ENCODE measurements at regions of chr3 and their contacts with region 1.

Region 1: DNA sequence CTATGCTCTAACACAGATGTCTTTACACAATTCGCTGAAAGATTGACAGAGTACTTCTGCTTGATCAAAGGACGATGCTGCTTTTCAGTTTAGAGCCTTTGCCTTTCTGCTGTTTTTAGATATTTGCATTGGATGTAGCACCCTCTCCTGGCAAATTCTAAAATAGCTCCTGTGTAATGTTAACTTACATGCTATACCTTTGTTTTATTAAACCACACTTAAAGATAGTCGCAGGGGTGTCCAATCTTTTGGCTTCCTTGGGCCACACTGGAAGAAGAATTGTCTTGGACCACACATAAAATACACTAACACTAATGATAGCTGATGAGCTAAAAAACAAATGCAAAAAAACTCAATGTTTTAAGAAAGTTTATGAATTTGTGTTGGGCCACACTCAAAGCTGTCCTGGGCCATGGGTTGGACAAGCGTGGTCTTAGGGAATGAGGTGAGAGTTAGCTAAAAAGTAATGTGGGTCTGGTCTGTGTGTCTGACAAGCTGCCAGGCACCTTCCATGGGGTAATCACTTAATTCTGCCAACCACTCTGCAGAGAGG is 62.9 kb downstream of the ATG7 start:
- DNase-seq: peak in 1 of 2 donors; percentile 74
- ATAC-seq: peak; percentile 78 to 91 (median 91)
- H3K4me3 ChIP-seq: no peak overlapping the region
- H3K4me3 Mint-ChIP-seq: no peak overlapping the region
- H3K27ac ChIP-seq: no peak overlapping the region
- H3K27ac Mint-ChIP-seq: no peak overlapping the region
- H3K4me1 ChIP-seq: no peaks in the 10 kb centered on the region
- H3K4me1 Mint-ChIP-seq: no peaks in the 10 kb centered on the region
- H3K27me3 ChIP-seq: no peaks in the 10 kb centered on the region
- H3K27me3 Mint-ChIP-seq: no peaks in the 10 kb centered on the region
- CTCF ChIP-seq: peak; percentile 58

Region 2: DNA sequence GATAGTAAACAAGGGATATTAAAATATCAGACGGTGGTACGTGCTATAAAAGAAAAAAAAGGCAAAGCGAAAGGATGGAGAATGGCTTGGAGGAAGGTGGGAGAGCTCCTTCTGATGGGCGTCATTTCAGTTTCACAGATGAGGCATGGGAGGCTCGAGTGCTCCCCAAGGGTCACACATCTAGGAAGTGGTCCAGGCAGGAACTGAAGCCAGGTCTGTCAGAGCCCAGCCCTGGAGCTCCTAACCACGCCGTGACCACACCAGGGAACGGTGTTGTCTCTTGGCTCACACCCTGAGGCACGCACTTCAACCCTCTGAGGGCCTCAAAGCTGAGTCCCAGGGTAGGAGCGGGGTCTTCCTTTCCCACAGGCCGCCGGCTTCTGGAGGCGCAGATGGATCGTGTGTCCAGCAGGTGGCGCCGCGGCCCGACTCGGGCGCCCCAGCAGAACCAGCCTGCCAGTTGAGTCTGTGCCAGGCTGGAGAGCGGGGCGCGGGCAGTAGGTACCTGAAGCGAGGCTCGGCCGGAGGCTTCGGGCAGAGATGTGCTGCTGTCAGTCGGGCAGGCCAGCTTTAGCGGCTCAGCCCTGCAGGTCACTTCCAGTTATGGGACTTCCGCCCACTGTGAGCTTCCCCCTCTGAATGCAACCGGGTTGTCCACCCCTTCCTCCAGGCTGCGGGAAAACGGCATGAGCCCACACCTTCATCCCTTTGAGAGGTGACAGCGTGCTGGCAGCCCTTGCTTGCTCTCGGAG is 274.5 kb before region 1 on chr3:
- intact Hi-C with region 1: loop called (anchors 5 kb)
- DNase-seq: peak; percentile 29 to 48
- ATAC-seq: peak; percentile 29 to 70 (median 48)
- H3K4me3 ChIP-seq: no peak overlapping the region
- H3K4me3 Mint-ChIP-seq: no peak overlapping the region
- H3K27ac ChIP-seq: no peak overlapping the region
- H3K27ac Mint-ChIP-seq: no peak overlapping the region
- H3K4me1 ChIP-seq: peaks cover 7% of the 10 kb centered on the region
- H3K4me1 Mint-ChIP-seq: no peaks in the 10 kb centered on the region
- H3K27me3 ChIP-seq: no peaks in the 10 kb centered on the region
- H3K27me3 Mint-ChIP-seq: peaks cover 7 to 18% of the 10 kb centered on the region in 2 donors
- CTCF ChIP-seq: peak; percentile 60

Region 3: GRCh38 chr3:11236595-11237461 is 98.3 kb before region 1 on chr3:
- intact Hi-C with region 1: loop called (anchors 1 kb)
- DNase-seq: peak; percentile 71 to 86
- ATAC-seq: peak; percentile 76 to 81 (median 78)
- H3K4me3 ChIP-seq: no peak overlapping the region
- H3K4me3 Mint-ChIP-seq: no peak overlapping the region
- H3K27ac ChIP-seq: no peak overlapping the region
- H3K27ac Mint-ChIP-seq: no peak overlapping the region
- H3K4me1 ChIP-seq: no peaks in the 10 kb centered on the region
- H3K4me1 Mint-ChIP-seq: no peaks in the 10 kb centered on the region
- H3K27me3 ChIP-seq: no peaks in the 10 kb centered on the region
- H3K27me3 Mint-ChIP-seq: peaks cover 26 to 35% of the 10 kb centered on the region in 2 donors
- CTCF ChIP-seq: peak; percentile 97

Region 4: DNA sequence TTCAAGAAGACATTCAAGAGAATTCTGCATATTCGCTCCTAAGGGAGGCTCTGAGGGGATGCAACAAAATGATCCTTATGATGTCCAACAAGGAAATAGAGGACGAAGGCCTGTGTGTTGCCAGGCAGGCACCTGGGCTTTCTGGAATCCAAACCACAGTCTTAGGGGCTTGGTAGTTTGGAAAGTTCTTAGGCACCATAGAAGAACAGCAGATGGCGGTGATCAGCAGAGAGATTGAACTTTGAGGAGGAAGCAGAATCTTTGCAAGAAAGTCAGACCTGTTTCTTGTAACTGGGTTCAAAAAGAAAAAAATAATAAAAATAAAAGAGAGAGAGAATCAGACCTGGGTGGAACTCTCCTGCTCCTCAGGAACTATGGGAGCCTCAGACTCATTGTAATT is 74.7 kb before region 1 on chr3:
- intact Hi-C with region 1: loop called (anchors 1 kb)
- DNase-seq: peak in 1 of 2 donors; percentile 30
- ATAC-seq: no peak
- H3K4me3 ChIP-seq: no peak overlapping the region
- H3K4me3 Mint-ChIP-seq: no peak overlapping the region
- H3K27ac ChIP-seq: no peak overlapping the region
- H3K27ac Mint-ChIP-seq: no peak overlapping the region
- H3K4me1 ChIP-seq: no peaks in the 10 kb centered on the region
- H3K4me1 Mint-ChIP-seq: no peaks in the 10 kb centered on the region
- H3K27me3 ChIP-seq: no peaks in the 10 kb centered on the region
- H3K27me3 Mint-ChIP-seq: peaks cover 10 to 28% of the 10 kb centered on the region in 2 donors
- CTCF ChIP-seq: no peak

Region 5: DNA sequence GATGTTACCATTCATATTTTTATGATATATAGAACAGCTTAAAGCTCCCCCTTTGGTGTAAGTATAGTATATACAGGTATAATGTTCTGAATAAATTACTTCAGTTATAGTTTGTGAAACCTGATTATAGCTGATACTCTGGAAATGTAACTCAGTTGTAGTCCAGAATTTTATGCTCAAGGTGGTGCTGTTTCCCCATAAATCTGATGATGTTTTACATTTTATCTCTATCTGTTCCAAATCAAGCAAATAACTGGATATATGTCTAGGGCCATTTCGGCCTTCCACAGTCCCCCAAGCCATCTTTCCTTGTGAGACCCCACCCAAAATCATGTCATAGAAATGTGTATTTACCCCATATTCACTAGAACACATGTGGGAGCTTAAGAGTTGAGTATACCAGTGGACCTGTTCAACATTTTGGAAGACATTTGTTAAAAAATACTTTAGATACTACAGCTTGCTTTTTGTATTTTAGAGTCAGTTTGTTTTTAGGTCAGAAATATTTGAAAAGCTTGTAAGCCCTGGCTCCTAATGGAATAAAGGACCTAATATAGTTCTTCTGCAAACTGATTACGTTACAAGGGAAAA is 44.2 kb after region 1 on chr3:
- intact Hi-C with region 1: no loop called
- DNase-seq: peak in 1 of 2 donors; percentile 68
- ATAC-seq: peak in 1 of 3 donors; percentile 61
- H3K4me3 ChIP-seq: no peak overlapping the region
- H3K4me3 Mint-ChIP-seq: no peak overlapping the region
- H3K27ac ChIP-seq: no peak overlapping the region
- H3K27ac Mint-ChIP-seq: peak overlapping the region in 1 of 2 donors; percentile 18
- H3K4me1 ChIP-seq: no peaks in the 10 kb centered on the region
- H3K4me1 Mint-ChIP-seq: no peaks in the 10 kb centered on the region
- H3K27me3 ChIP-seq: no peaks in the 10 kb centered on the region
- H3K27me3 Mint-ChIP-seq: no peaks in the 10 kb centered on the region
- CTCF ChIP-seq: peak; percentile 58